Right ventricle myocardium inferior (tissue), 1 donor: ENCODE measurements at regions of chr1 and their contacts with region 1.

Region 1: DNA sequence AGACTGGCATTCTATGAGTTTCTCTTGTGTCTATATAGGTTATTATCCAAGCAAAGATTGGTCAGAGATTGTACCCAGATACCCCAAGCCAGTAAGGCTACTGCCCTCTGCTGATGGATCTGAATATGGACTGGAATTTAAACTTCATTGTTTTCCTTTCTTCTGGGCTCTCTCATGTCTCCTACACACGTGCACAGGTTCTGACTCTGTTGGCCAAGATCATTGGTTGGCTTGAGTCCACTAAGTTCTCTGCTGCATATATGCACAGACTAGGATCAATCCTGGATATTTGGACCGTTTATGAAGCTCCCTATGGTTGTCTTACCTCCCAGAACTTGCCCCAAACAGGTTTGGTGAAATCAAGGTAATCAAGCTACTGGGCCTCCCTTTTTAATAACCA is 69.7 kb downstream of the CC2D1B start:
- DNase-seq: no peak
- ATAC-seq: no peak

Region 2: GRCh38 chr1:51792864-51793263 is 503.5 kb before region 1 on chr1:
- intact Hi-C with region 1: no loop called
- DNase-seq: no peak
- ATAC-seq: peak; percentile 23

Region 3: DNA sequence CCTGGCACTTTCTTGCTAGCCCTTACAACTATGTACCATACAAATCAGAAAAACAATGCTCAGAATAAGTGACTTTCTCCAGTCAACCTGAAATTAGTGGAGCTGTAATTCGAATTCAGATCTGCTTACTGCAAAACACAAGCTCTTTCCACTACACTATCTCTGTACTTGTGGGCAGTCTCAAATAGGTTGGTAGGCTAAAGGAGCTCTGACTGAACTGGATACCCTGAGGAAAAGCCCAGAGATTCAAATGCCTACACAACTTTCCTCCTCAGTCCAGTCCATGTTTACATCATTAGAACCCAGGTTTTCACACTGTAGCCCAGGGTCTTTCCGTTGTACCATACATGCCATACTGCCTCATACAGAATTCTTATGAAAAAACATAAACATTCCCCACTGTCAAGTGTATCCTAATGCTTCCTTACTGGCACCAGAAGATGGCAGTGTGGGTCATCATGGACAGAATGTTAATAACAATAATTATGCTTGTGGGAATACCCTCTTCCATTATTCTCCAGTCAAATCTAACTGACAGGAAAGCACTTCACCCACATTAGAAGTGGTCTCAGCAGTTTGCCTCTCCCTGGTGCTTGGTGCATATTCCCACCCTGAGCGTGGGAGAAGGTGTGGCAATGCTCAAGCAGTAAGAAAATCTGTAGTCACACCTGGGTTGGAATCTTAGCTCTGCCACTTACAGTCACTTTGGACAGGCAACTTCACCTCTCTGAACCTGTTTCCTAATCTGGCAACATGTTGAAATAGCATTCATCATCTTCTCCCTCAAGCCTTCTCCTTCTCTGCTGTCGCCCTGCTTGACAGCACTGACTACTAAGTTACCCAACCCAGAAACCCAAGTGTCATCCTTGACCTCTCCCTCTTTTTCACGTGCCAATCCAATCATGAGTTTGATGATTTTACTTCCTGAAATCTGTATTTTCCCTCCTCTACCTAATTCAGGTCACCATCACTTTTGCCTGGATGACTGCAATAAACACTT is 168.9 kb before region 1 on chr1:
- intact Hi-C with region 1: loop called (anchors 5 kb)
- DNase-seq: no peak
- ATAC-seq: peak; percentile 64

Region 4: GRCh38 chr1:52141513-52142219 is 154.7 kb before region 1 on chr1 and contains the start of gene ZFYVE9:
- intact Hi-C with region 1: loop called (anchors 5 kb)
- DNase-seq: peak; percentile 83
- ATAC-seq: peak; percentile 96
- total RNA-seq, gene ZFYVE9: 18.0 TPM